Esophagus squamous epithelium (tissue), 5 donors: ENCODE measurements at regions of chr3 and their contacts with region 1.

Region 1: DNA sequence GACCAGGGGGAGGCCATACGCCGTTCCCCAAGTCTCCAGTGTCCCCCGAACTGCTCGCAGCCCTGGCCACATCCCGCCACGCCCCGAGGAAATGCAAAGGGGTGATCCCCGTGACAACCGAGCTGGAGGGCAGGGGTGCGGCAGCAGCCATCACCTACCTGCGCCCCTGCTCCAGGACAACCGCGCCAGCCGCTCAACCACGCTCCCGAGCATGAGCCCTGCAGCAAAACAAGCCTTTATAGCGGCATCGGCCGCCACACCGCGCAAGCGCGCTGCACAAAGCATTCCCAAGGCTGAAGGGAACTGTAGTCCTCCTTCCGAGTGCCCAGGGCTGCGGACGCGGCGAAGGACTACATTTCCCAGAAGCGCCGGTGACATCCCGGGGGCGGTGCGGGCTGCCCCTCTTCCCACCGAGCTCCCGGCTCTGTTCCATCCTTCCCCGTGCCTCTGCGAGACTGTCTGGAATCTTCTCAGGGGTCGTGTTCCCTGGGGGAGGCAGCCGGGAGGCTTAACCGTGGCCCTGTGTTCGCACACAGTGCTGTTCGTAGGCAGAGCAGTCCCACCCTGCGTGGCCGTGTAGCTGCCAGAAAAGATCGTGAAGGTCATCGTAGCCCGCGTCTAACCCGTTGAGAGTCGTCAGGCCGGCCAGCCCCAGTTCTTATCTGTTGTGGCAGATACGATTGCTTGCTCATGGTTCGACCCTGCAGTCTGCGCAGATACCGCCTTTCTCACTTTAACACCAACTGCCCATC is at the start of gene ABCC5:
- DNase-seq: peak; percentile 55
- H3K4me3 ChIP-seq: peak within 1 kb of the TSS; percentile 84 to 100 (median 98)
- H3K27ac ChIP-seq: peak within 1 kb of the TSS; percentile 89 to 95 (median 90)
- H3K4me1 ChIP-seq: peaks cover 9 to 36% (median 10%) of the 10 kb centered on the region in 3 donors
- H3K27me3 ChIP-seq: no peaks in the 10 kb centered on the region
- CTCF ChIP-seq: peak in 3 of 6 experiments; percentile 9 to 50 (median 43)
- POLR2A ChIP-seq: peak in 1 of 4 donors; percentile 70
- total RNA-seq, gene ABCC5: 34.3 to 50.2 (median 40.4) TPM

Region 2: DNA sequence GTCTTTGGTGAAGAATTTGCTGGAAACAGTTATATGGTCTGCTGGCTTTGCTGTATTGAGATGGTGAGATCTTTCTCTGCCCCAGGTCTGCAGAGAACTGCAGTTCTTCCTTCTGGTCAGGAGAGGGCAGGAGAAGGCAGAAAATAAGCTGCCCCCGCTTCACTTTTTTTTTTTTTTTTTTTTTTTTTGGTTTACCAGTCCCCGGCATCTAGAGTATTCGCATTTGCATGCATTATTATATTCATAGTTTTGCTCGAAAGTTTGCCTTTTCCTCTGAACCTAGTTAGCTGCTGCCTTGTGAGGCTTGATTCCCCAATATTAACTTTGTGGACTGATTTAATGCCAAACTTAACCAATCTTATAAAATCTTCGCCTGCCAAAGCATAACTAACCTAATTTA is 122.6 kb before region 1 on chr3:
- intact Hi-C with region 1: loop called (anchors 5 kb)
- DNase-seq: no peak
- H3K4me3 ChIP-seq: no peak overlapping the region
- H3K27ac ChIP-seq: no peak overlapping the region
- H3K4me1 ChIP-seq: peaks cover 0 to 32% (median 0%) of the 10 kb centered on the region in 3 donors
- H3K27me3 ChIP-seq: peaks cover 0 to 20% (median 0%) of the 10 kb centered on the region in 4 donors
- CTCF ChIP-seq: peak; percentile 68 to 80 (median 76)
- POLR2A ChIP-seq: no peak

Region 3: DNA sequence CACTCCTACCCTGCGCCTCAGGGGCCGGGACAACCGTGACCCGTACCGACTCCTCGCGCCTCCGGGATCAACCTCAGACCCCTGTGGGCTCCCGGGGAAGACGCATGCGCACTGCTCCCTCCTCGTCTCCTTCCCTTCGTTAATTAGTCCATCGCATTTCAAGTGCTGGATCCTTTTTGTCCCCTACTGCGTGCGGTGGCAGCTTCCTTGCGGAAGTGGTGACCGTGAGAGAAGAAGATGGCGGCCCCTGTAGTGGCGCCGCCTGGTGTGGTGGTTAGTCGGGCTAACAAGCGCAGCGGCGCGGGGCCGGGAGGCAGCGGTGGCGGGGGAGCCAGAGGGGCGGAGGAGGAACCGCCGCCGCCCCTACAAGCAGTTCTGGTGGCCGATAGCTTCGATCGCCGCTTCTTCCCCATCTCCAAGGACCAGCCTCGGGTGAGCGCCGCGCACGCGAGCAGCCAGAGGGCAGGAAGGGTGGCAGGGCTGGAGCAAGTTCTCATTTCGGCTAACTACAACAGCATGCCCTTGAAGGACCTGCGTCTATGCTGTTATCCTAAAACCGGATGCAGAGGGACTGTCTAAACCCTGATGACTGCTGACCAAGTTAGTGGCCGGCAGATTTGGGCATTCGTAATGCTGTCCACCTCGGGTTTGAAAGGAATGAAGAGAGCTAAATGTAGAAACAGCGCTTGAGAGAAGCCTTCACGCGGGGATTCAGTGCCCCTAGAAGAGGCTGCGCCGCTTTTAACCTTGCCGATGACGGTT is 117.5 kb after region 1 on chr3 and contains the start of gene EIF2B5:
- intact Hi-C with region 1: loop called (anchors 10 kb)
- DNase-seq: peak; percentile 35
- H3K4me3 ChIP-seq: peak within 1 kb of the TSS; percentile 60 to 92 (median 86)
- H3K27ac ChIP-seq: peak within 1 kb of the TSS; percentile 85 to 96 (median 94)
- H3K4me1 ChIP-seq: peaks cover 9 to 39% (median 16%) of the 10 kb centered on the region in 3 donors
- H3K27me3 ChIP-seq: no peaks in the 10 kb centered on the region
- CTCF ChIP-seq: peak in 5 of 6 experiments; percentile 11 to 69 (median 29)
- POLR2A ChIP-seq: peak in 3 of 4 donors; percentile 54 to 76 (median 66)
- total RNA-seq, gene EIF2B5: 27.2 to 51.5 (median 42.1) TPM

Region 4: GRCh38 chr3:184289426-184289938 is 271.6 kb after region 1 on chr3:
- intact Hi-C with region 1: no loop called
- DNase-seq: no peak
- H3K4me3 ChIP-seq: no peak overlapping the region
- H3K27ac ChIP-seq: no peak overlapping the region
- H3K4me1 ChIP-seq: no peaks in the 10 kb centered on the region
- H3K27me3 ChIP-seq: peaks cover 0 to 24% (median 0%) of the 10 kb centered on the region in 4 donors
- CTCF ChIP-seq: peak; percentile 25 to 63 (median 41)
- POLR2A ChIP-seq: no peak